H1 (cell line): ENCODE measurements at regions of chr4 and their contacts with region 1.

Region 1: DNA sequence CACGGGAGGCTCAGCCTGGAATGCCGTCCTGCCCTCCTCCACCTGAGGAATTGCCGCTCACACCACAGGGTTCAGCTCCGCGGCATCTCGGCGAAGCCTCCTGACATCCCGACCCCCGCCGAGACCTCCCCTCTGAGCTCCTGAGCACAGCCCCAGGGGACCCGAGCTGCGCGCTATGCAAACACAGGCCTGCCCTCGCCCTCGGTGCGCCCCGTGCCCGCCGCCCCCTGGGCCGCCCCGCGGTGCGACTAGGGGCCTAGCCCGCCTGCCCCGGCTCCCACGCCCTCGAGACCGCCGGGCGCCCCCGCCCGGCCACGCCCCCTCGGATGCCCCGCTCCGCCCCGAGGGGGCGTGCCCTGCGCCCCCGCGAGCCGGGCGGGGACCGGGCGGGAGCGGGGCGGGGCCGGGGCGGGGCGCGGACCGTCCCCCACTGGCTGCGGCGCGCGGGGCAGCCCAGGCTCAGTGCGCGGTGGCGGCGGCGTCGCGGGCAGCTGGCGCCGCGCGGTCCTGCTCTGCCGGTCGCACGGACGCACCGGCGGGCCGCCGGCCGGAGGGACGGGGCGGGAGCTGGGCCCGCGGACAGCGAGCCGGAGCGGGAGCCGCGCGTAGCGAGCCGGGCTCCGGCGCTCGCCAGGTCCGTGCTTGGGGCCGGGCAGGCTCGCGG is at the start of gene FGFR3:
- DNase-seq: peak; percentile 47 to 83
- H3K4me3 ChIP-seq: peak within 1 kb of the TSS; percentile 55 to 71 (median 64)
- H3K27ac ChIP-seq: no peak within 1 kb of the TSS
- H3K4me1 ChIP-seq: peaks cover 0 to 19% (median 9%) of the 10 kb centered on the region in 4 experiments; a peak in 6 of 7 replicates
- H3K27me3 ChIP-seq: peaks cover 5 to 44% (median 36%) of the 10 kb centered on the region in 4 experiments
- CTCF ChIP-seq: no peak
- EP300 ChIP-seq: no peak
- POLR2A ChIP-seq: peak in 1 of 2 experiments; percentile 46; a peak in 2 of 3 replicates
- RAD21 ChIP-seq: no peak
- total RNA-seq, gene FGFR3: 19.5 TPM in 2 replicates

Region 2: DNA sequence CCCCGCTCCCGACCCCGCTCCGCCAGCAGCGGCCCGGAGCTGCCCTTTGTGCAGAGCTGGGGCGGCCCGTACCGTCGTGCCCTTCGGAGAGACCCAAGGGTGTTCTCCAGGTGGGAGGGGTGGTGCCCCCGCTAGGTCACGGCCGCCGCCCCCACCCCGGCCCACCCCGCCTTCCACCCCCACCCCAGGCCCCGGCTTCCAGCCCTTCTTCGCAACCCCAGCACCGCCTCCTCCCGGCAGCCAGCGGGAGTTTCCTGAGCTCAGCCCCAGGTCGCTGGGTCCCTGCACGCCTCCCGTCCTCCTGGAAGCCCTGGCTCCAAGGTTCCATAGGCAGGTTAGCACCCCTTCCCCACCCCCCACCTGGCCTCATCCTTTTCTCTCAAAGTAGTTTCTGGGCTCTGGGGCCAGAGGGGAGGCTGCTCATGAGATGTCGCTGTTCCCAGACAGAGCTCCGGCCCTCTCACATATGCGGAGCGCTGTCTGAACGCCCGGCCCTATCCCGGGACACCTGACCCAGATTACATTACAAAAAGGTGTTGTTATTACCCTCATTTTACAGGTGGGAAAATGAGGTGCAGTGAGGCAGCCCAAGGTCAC is 25.1 kb before region 1 on chr4:
- CTCF ChIA-PET with region 1: interaction called, 2,507 read pairs
- POLR2A ChIA-PET with region 1: interaction called, 170 read pairs
- DNase-seq: peak; percentile 43 to 84
- H3K4me3 ChIP-seq: peak overlapping the region; percentile 10 to 49 (median 26); a peak in 7 of 8 replicates
- H3K27ac ChIP-seq: no peak overlapping the region
- H3K4me1 ChIP-seq: peaks cover 5 to 44% (median 31%) of the 10 kb centered on the region in 4 experiments
- H3K27me3 ChIP-seq: peaks cover 0 to 5% (median 0%) of the 10 kb centered on the region in 4 experiments; a peak in 2 of 7 replicates
- CTCF ChIP-seq: peak in 2 of 3 experiments; percentile 45 to 51; a peak in 3 of 4 replicates
- EP300 ChIP-seq: no peak
- POLR2A ChIP-seq: no peak
- RAD21 ChIP-seq: peak; percentile 19 to 45; a peak in 3 of 4 replicates